ENCODE measurements at regions of chr18 and their contacts with region 1.

Region 1: DNA sequence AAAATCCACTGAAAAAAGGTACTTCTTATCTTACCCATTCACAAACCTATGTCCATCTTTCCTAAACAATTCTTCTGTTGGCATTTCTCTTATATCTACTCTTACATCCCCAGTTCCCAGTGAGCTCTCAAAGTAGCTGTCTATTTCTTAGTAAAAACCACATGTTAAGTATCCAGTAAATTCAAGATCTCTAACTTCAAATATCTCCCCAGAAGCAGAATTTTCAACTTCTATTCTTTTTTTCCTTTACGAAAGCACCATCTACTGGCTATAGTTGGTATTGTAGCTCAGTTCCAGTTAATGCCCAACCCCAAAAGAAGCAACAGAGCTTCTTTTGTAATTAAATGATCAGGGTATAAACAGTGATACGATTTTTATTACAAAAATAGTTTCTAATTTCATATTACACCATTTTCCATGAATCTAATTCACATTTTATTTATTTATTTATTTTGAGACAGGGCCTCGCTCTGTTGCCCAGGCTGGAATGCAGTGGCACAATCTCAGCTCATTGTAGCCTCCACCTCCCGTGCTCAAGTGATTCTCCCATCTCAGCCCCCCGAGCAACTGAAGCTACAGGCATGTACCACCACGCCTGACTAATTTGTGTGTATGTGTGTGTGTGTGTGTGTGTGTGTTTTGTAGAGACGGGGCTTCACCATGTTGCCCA is 28.5 kb downstream of the HRH4 start:
- DNase-seq: peak in 2 of 4 donors; percentile 45 to 48
- ATAC-seq: peak; percentile 82
- H3K4me3 ChIP-seq: no peak overlapping the region
- H3K27ac ChIP-seq: no peak overlapping the region
- H3K4me1 ChIP-seq: no peaks in the 10 kb centered on the region
- H3K27me3 ChIP-seq: no peaks in the 10 kb centered on the region
- CTCF ChIP-seq: peak; percentile 83 to 86

Region 2: GRCh38 chr18:24063121-24063731 is 425.7 kb before region 1 on chr18:
- intact Hi-C with region 1: no loop called
- DNase-seq: no peak
- ATAC-seq: no peak
- H3K4me3 ChIP-seq: no peak overlapping the region
- H3K27ac ChIP-seq: no peak overlapping the region
- H3K4me1 ChIP-seq: peaks cover 0 to 17% of the 10 kb centered on the region in 2 donors
- H3K27me3 ChIP-seq: no peaks in the 10 kb centered on the region
- CTCF ChIP-seq: no peak

Region 3: GRCh38 chr18:24354286-24354685 is 134.7 kb before region 1 on chr18:
- intact Hi-C with region 1: loop called in 1 of 2 experiments (anchors 10 kb)
- DNase-seq: no peak
- ATAC-seq: no peak
- H3K4me3 ChIP-seq: no peak overlapping the region
- H3K27ac ChIP-seq: no peak overlapping the region
- H3K4me1 ChIP-seq: no peaks in the 10 kb centered on the region
- H3K27me3 ChIP-seq: no peaks in the 10 kb centered on the region
- CTCF ChIP-seq: no peak

Region 4: GRCh38 chr18:24366328-24366727 is 122.6 kb before region 1 on chr18:
- intact Hi-C with region 1: no loop called
- DNase-seq: no peak
- ATAC-seq: no peak
- H3K4me3 ChIP-seq: no peak overlapping the region
- H3K27ac ChIP-seq: no peak overlapping the region
- H3K4me1 ChIP-seq: no peaks in the 10 kb centered on the region
- H3K27me3 ChIP-seq: no peaks in the 10 kb centered on the region
- CTCF ChIP-seq: no peak